Dorsolateral prefrontal cortex (tissue), 120 donors: ENCODE measurements at regions of chr14 and their contacts with region 1.

Region 1: DNA sequence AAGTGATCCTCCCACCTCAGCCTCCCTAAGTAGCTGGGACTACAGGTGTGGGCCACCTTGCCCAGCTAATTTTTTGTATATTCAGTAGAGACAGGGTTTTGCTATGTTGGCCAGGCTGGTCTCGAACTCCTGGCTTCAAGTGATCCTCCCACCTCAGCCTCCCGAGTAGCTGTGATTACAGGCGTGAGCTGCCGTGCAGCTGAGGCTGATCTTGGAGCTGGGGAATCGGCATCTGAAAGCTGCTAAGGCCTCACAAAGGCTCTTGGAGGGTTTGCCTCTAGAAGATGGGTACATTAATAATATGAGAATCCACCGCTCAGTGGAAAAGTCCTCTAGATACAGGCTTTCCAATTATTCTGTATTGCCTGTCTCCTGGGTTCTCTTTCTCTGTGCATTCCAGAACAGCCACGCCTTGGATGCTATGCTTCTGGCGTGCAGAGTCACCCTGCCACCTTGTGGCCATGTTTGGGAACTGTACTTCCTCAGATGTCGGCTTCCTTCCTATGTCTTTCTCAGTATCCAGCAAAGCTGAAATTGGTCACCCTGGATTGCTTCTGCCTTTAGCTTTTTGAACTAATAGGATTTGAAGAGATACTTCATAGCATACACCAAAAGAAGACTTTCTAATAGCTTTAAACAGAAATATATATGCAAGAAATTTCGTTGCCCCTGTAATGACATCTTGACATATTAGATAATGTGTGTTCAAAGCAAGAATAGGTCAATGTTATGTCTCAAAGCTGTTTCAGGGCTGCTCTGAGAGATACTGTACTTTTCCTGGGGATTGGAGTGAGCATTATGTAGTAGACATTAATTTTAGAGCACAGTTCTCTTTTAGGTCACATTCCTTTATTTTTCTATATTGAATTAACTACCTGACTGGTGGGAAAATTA is 75.4 kb downstream of the SNAPC1 start:
- DNase-seq: peak; percentile 61 to 89 (median 79)
- H3K4me3 ChIP-seq: no peak overlapping the region
- H3K27ac ChIP-seq: peak overlapping the region in 3 of 59 donors; percentile 51 to 65 (median 51)
- H3K27me3 ChIP-seq: peaks cover 0 to 5% (median 0%) of the 10 kb centered on the region in 45 donors
- CTCF ChIP-seq: peak; percentile 85 to 100 (median 97)

Region 2: GRCh38 chr14:61296719-61297502 is 540.7 kb before region 1 on chr14:
- intact Hi-C with region 1: loop called in 1 of 2 experiments (anchors 10 kb)
- DNase-seq: no peak
- H3K4me3 ChIP-seq: no peak overlapping the region
- H3K27ac ChIP-seq: no peak overlapping the region
- H3K27me3 ChIP-seq: peaks cover 0 to 17% (median 0%) of the 10 kb centered on the region in 45 donors
- CTCF ChIP-seq: peak; percentile 41 to 81 (median 61)

Region 3: GRCh38 chr14:61456720-61457119 is 380.9 kb before region 1 on chr14:
- intact Hi-C with region 1: loop called (anchors 2 kb)
- DNase-seq: peak; percentile 50 to 92 (median 79)
- H3K4me3 ChIP-seq: no peak overlapping the region
- H3K27ac ChIP-seq: no peak overlapping the region
- H3K27me3 ChIP-seq: peaks cover 0 to 3% (median 0%) of the 10 kb centered on the region in 45 donors
- CTCF ChIP-seq: peak; percentile 83 to 98 (median 92)

Region 4: DNA sequence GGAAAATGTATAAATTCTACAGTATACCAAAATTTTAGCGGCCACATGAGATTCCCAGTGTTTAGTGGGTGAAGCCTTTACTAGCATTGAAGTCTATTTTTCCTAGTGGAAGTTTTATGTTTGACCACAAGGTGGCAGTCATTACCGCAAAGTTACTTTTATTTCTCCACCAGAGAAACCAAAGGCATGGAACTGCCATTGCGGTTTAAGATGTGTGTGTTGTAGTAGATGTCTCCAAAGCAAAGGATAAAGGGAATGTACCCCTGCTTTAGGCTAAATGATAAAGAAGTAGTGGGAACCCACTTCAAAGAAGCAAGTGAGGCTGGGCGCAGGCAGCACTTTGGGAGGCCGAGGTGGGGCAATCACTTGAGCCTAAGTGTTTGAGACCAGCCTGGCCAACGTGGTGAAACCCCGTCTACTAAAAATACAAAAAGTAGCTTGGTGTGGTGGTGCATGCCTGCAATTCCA is 375.7 kb before region 1 on chr14:
- intact Hi-C with region 1: loop called (anchors 2 kb)
- DNase-seq: peak in 1 of 10 donors; percentile 53
- H3K4me3 ChIP-seq: no peak overlapping the region
- H3K27ac ChIP-seq: no peak overlapping the region
- H3K27me3 ChIP-seq: no peaks in the 10 kb centered on the region
- CTCF ChIP-seq: peak; percentile 80 to 99 (median 91)

Region 5: GRCh38 chr14:61812761-61813606 is 24.6 kb before region 1 on chr14:
- intact Hi-C with region 1: no loop called
- DNase-seq: peak in 4 of 10 donors; percentile 6 to 48 (median 13)
- H3K4me3 ChIP-seq: peak overlapping the region; percentile 39 to 76 (median 63)
- H3K27ac ChIP-seq: peak overlapping the region in 47 of 59 donors; percentile 17 to 90 (median 68)
- H3K27me3 ChIP-seq: peaks cover 0 to 29% (median 6%) of the 10 kb centered on the region in 45 donors
- CTCF ChIP-seq: no peak